T-cell (primary cell): ENCODE measurements at regions of chr19 and their contacts with region 1.

Region 1: DNA sequence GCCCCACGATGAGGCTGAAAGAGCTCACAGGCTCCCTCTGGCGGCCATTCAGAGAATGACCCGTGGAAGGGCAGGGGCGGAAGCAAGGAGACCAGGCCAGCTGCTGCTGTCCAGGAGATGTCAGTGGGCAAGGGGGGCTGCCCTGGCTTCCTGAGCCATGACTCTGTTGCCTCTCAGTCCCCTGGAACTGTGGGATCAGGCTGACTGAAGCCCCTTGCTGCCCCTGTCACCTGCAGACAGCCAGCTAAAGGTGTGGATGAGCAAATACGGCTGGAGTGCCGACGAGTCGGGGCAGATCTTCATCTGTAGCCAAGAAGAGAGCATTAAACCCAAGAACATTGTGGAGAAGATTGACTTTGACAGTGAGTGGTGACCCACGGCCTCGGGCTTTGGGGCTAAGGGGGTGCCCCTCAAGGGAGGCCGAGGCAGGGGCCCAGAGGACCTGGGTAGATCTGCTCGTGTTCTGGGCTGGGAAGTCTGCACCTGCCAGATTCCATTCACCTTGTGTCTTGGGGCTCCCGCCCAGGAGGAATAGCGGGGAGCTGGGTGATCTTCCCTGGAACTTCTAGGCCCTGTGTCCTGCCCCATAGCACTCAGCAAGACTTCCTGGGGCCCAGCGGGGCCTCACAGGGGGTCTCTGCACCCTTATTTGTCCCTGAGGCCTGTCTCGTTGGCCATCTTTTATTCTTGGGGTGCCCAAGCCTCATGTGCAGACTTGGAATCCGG is 12.5 kb upstream of the ACTN4 start:
- DNase-seq: peak in 34 of 35 experiments; percentile 35 to 84 (median 64)
- ATAC-seq: peak in 1 of 4 experiments; percentile 36
- H3K4me3 ChIP-seq: no peak overlapping the region
- H3K4me3 Mint-ChIP-seq: peak overlapping the region in 2 of 3 donors; percentile 6 to 39
- H3K27ac ChIP-seq: peak overlapping the region; percentile 37
- H3K27ac Mint-ChIP-seq: peak overlapping the region; percentile 87 to 91
- H3K4me1 ChIP-seq: peaks cover 17 to 33% of the 10 kb centered on the region in 2 experiments
- H3K4me1 Mint-ChIP-seq: peaks cover 26 to 35% (median 31%) of the 10 kb centered on the region in 3 donors
- H3K27me3 ChIP-seq: no peaks in the 10 kb centered on the region
- H3K27me3 Mint-ChIP-seq: no peaks in the 10 kb centered on the region

Region 2: GRCh38 chr19:38308006-38308766 is 326.7 kb before region 1 on chr19:
- CTCF ChIA-PET with region 1: no interaction called
- POLR2A ChIA-PET with region 1: no interaction called
- DNase-seq: no peak
- ATAC-seq: no peak
- H3K4me3 ChIP-seq: no peak overlapping the region
- H3K4me3 Mint-ChIP-seq: no peak overlapping the region
- H3K27ac ChIP-seq: no peak overlapping the region
- H3K27ac Mint-ChIP-seq: no peak overlapping the region
- H3K4me1 ChIP-seq: peaks cover 0 to 7% of the 10 kb centered on the region in 2 experiments
- H3K4me1 Mint-ChIP-seq: peaks cover 4 to 6% (median 4%) of the 10 kb centered on the region in 3 donors
- H3K27me3 ChIP-seq: no peaks in the 10 kb centered on the region
- H3K27me3 Mint-ChIP-seq: no peaks in the 10 kb centered on the region

Region 3: DNA sequence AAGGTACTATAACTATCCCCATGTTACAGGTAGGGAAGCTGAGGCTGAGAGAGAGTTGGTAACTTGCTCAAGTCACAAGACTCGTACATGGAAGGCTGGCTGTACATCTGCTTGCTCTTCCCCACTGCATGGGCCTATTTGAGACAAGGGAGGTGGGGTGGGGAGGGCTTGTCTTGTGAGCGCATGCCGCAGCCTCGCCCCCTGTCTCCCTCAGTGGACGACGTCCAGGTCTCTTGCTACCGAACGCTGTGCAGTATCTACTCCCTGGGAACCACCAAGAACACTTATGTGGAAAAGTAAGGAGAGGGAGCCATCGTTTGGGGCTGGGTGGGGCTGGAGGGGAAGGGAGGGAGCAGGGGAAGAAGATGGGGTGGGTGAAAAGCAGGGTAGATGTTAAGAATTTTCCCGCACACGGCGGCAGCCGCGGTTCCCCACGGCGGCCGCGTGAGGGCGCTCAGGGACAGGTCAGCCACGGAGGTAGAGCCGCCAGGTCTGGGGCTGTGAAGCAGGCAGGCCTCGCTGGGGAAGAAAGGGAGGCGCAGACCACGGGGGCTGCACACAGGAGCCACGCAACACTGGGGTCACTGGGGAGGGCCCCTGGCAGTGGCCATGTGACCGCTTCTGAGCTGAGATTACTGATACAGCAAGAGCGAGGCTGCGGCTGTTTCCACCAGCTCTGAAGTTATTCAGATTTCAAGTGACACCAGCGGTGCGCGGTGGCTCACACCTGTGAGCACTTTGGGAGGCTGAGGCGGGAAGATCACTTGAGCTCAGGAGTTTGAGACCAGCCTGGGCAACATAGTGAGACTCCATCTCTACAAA is 119.9 kb before region 1 on chr19:
- CTCF ChIA-PET with region 1: interaction called in 1 of 2 experiments, 13 read pairs
- POLR2A ChIA-PET with region 1: no interaction called
- DNase-seq: peak; percentile 48 to 86 (median 69)
- ATAC-seq: peak; percentile 90 to 93 (median 92)
- H3K4me3 ChIP-seq: no peak overlapping the region
- H3K4me3 Mint-ChIP-seq: peak overlapping the region in 1 of 3 donors; percentile 38
- H3K27ac ChIP-seq: no peak overlapping the region
- H3K27ac Mint-ChIP-seq: peak overlapping the region; percentile 34 to 39
- H3K4me1 ChIP-seq: peaks cover 0 to 14% of the 10 kb centered on the region in 2 experiments
- H3K4me1 Mint-ChIP-seq: peaks cover 6 to 16% (median 13%) of the 10 kb centered on the region in 3 donors
- H3K27me3 ChIP-seq: peaks cover 0 to 17% of the 10 kb centered on the region in 2 experiments
- H3K27me3 Mint-ChIP-seq: no peaks in the 10 kb centered on the region

Region 4: DNA sequence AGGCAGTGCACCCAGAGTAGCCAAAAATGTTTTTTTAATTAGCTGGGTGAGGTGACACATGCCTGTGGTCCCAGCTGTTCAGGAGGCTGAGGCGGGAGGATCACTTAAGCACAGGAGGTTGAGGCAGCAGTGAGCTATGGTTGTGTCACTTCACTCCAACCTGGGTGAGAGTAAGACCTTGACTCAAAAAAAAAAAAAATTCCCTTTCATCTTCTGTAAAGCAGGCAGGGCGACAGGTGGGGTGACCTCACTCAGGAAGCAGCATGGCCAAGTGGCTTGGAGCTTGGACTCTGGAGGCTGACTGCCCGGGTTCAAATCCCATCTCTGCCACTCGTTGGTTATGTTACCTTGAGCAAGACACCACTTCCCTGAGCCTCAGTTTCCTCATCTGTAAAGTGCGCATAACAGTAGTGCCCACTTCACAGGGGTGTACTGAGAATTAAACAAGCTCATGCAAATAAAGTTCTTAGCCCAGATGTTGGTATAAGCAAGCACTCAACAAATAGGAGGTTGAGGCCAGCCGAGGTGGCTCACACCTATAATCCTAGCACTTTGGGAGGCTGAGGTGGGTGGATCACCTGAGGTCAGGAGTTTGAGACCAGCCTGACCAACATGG is 65.4 kb before region 1 on chr19:
- CTCF ChIA-PET with region 1: no interaction called
- POLR2A ChIA-PET with region 1: no interaction called
- DNase-seq: no peak
- ATAC-seq: no peak
- H3K4me3 ChIP-seq: no peak overlapping the region
- H3K4me3 Mint-ChIP-seq: no peak overlapping the region
- H3K27ac ChIP-seq: no peak overlapping the region
- H3K27ac Mint-ChIP-seq: no peak overlapping the region
- H3K4me1 ChIP-seq: peaks cover 0 to 11% of the 10 kb centered on the region in 2 experiments
- H3K4me1 Mint-ChIP-seq: peaks cover 4 to 8% (median 5%) of the 10 kb centered on the region in 3 donors
- H3K27me3 ChIP-seq: peaks cover 2 to 10% of the 10 kb centered on the region in 2 experiments
- H3K27me3 Mint-ChIP-seq: peaks cover 3 to 4% of the 10 kb centered on the region in 2 donors

Region 5: GRCh38 chr19:38618590-38619360 is 16.1 kb before region 1 on chr19 and contains the start of gene EIF3K:
- CTCF ChIA-PET with region 1: interaction called in 1 of 2 experiments, 16 read pairs
- POLR2A ChIA-PET with region 1: no interaction called
- DNase-seq: peak; percentile 92 to 99 (median 95)
- ATAC-seq: peak; percentile 68 to 82 (median 74)
- H3K4me3 ChIP-seq: peak within 1 kb of the TSS; percentile 95 to 96
- H3K4me3 Mint-ChIP-seq: peak within 1 kb of the TSS; percentile 96 to 98 (median 98)
- H3K27ac ChIP-seq: peak within 1 kb of the TSS; percentile 83
- H3K27ac Mint-ChIP-seq: peak within 1 kb of the TSS; percentile 98
- H3K4me1 ChIP-seq: peaks cover 11 to 62% of the 10 kb centered on the region in 2 experiments
- H3K4me1 Mint-ChIP-seq: peaks cover 50 to 56% (median 52%) of the 10 kb centered on the region in 3 donors
- H3K27me3 ChIP-seq: no peaks in the 10 kb centered on the region
- H3K27me3 Mint-ChIP-seq: no peaks in the 10 kb centered on the region
- total RNA-seq, gene EIF3K: 317 to 352 (median 319) TPM

Region 6: GRCh38 chr19:38647368-38647965 is 12.5 kb after region 1 on chr19 and contains the start of gene ACTN4:
- CTCF ChIA-PET with region 1: interaction called in 1 of 2 experiments, 15 read pairs
- POLR2A ChIA-PET with region 1: no interaction called
- DNase-seq: peak; percentile 97 to 100 (median 100)
- ATAC-seq: peak; percentile 92 to 96 (median 92)
- H3K4me3 ChIP-seq: peak within 1 kb of the TSS; percentile 87 to 90
- H3K4me3 Mint-ChIP-seq: peak within 1 kb of the TSS; percentile 88 to 98 (median 91)
- H3K27ac ChIP-seq: peak within 1 kb of the TSS; percentile 57
- H3K27ac Mint-ChIP-seq: peak within 1 kb of the TSS; percentile 81 to 85
- H3K4me1 ChIP-seq: peaks cover 21 to 45% of the 10 kb centered on the region in 2 experiments
- H3K4me1 Mint-ChIP-seq: peaks cover 34 to 47% (median 39%) of the 10 kb centered on the region in 3 donors
- H3K27me3 ChIP-seq: peaks cover 0 to 26% of the 10 kb centered on the region in 2 experiments
- H3K27me3 Mint-ChIP-seq: peaks cover 9 to 25% of the 10 kb centered on the region in 2 donors
- total RNA-seq, gene ACTN4: 100.0 to 201 (median 175) TPM